ENCODE measurements at regions of chr11 and their contacts with region 1.

Region 1: GRCh38 chr11:62542750-62543567 is 3.6 kb downstream of the AHNAK start:
- DNase-seq: peak; percentile 74
- ATAC-seq: peak; percentile 29
- H3K4me3 Mint-ChIP-seq: peak overlapping the region; percentile 95
- H3K27ac Mint-ChIP-seq: peak overlapping the region; percentile 97
- H3K4me1 Mint-ChIP-seq: peaks cover 78% of the 10 kb centered on the region
- H3K27me3 Mint-ChIP-seq: no peaks in the 10 kb centered on the region
- CTCF ChIP-seq: peak; percentile 78

Region 2: GRCh38 chr11:62421996-62422395 is 121.0 kb before region 1 on chr11:
- CTCF ChIA-PET with region 1: interaction called, 159 read pairs
- POLR2A ChIA-PET with region 1: interaction called, 20 read pairs
- intact Hi-C with region 1: loop called (anchors 1 kb)
- DNase-seq: no peak
- ATAC-seq: no peak
- H3K4me3 Mint-ChIP-seq: no peak overlapping the region
- H3K27ac Mint-ChIP-seq: no peak overlapping the region
- H3K4me1 Mint-ChIP-seq: peaks cover 6% of the 10 kb centered on the region
- H3K27me3 Mint-ChIP-seq: peaks cover 2% of the 10 kb centered on the region
- CTCF ChIP-seq: no peak

Region 3: DNA sequence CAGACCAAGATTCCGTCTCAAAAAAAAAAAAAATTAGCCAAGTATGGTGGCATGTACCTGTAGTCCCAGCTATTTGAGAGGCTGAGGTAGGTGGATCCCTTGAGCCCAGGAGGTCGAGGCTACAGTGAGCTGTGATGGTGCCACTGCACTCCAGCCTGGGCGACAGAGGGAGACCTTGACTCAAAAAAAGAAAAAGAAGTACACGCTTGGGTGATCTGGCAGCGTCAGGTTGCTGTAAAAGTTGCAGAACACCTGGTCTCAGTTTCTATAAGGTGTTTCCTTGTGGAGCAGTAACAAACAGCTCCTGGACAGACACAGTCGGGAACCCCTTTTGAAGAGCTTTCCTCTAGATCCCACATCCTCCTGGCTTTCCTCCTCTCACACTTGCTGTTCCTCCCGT is 78.3 kb before region 1 on chr11:
- CTCF ChIA-PET with region 1: interaction called, 7 read pairs
- POLR2A ChIA-PET with region 1: no interaction called
- intact Hi-C with region 1: loop called (anchors 2 kb)
- DNase-seq: no peak
- ATAC-seq: peak; percentile 72
- H3K4me3 Mint-ChIP-seq: no peak overlapping the region
- H3K27ac Mint-ChIP-seq: no peak overlapping the region
- H3K4me1 Mint-ChIP-seq: peaks cover 16% of the 10 kb centered on the region
- H3K27me3 Mint-ChIP-seq: no peaks in the 10 kb centered on the region
- CTCF ChIP-seq: no peak

Region 4: GRCh38 chr11:62508268-62509058 is 34.5 kb before region 1 on chr11:
- CTCF ChIA-PET with region 1: interaction called, 7 read pairs
- POLR2A ChIA-PET with region 1: interaction called, 3 read pairs
- intact Hi-C with region 1: loop called (anchors 5 kb)
- DNase-seq: no peak
- ATAC-seq: peak; percentile 87
- H3K4me3 Mint-ChIP-seq: no peak overlapping the region
- H3K27ac Mint-ChIP-seq: no peak overlapping the region
- H3K4me1 Mint-ChIP-seq: peaks cover 8% of the 10 kb centered on the region
- H3K27me3 Mint-ChIP-seq: peaks cover 1% of the 10 kb centered on the region
- CTCF ChIP-seq: no peak

Region 5: GRCh38 chr11:62601394-62602140 is 58.6 kb after region 1 on chr11 and contains the start of gene MTA2:
- CTCF ChIA-PET with region 1: interaction called, 5 read pairs
- POLR2A ChIA-PET with region 1: interaction called, 13 read pairs
- intact Hi-C with region 1: no loop called
- DNase-seq: peak; percentile 100
- ATAC-seq: peak; percentile 81
- H3K4me3 Mint-ChIP-seq: peak within 1 kb of the TSS; percentile 92
- H3K27ac Mint-ChIP-seq: peak within 1 kb of the TSS; percentile 97
- H3K4me1 Mint-ChIP-seq: peaks cover 45% of the 10 kb centered on the region
- H3K27me3 Mint-ChIP-seq: no peaks in the 10 kb centered on the region
- CTCF ChIP-seq: no peak
- total RNA-seq, gene MTA2: 170 and 175 TPM in 2 replicates

Measured in activated B cell treated with CpG ODN at 0.5 μM for 24 hours (primary cell).